K562 (cell line): ENCODE measurements at regions of chr11 and their contacts with region 1.

Region 1: GRCh38 chr11:56234155-56234554 is at the start of gene OR5T2:
- DNase-seq: no peak
- ATAC-seq: no peak
- H3K4me3 ChIP-seq: no peak within 1 kb of the TSS
- H3K27ac ChIP-seq: no peak within 1 kb of the TSS
- H3K4me1 ChIP-seq: no peaks in the 10 kb centered on the region
- H3K27me3 ChIP-seq: no peaks in the 10 kb centered on the region
- CTCF ChIP-seq: no peak
- EP300 ChIP-seq: no peak
- POLR2A ChIP-seq: no peak
- RAD21 ChIP-seq: no peak
- polyA plus RNA-seq, gene OR5T2: not detected

Region 2: DNA sequence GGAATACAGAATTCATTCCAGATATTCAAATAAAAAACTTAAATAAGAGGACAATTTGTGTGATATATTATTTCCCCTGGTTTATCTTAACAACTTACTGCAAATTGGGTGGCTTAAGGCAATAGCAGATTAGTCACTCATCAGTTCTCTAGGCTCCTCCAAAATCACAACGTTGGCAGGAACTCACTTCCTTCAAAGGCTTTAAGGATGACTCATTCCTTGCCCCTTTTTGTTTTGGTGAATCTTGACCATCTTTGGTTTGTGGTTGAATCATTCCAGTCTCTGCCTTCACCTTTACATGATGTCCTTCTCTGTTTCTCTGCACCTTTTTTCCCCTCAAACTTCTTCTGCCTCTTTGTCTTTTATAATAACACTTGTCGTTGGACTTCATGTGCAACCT is 267.8 kb before region 1 on chr11:
- CTCF ChIA-PET with region 1: no interaction called
- POLR2A ChIA-PET with region 1: no interaction called
- in situ Hi-C with region 1: no loop called
- intact Hi-C with region 1: no loop called
- DNase-seq: no peak
- ATAC-seq: no peak
- H3K4me3 ChIP-seq: no peak overlapping the region
- H3K27ac ChIP-seq: no peak overlapping the region
- H3K4me1 ChIP-seq: no peaks in the 10 kb centered on the region
- H3K27me3 ChIP-seq: no peaks in the 10 kb centered on the region
- CTCF ChIP-seq: no peak
- EP300 ChIP-seq: no peak
- POLR2A ChIP-seq: no peak
- RAD21 ChIP-seq: no peak

Region 3: GRCh38 chr11:56183459-56183858 is 50.7 kb before region 1 on chr11:
- CTCF ChIA-PET with region 1: no interaction called
- POLR2A ChIA-PET with region 1: no interaction called
- in situ Hi-C with region 1: no loop called
- intact Hi-C with region 1: loop called (anchors 10 kb)
- DNase-seq: no peak
- ATAC-seq: no peak
- H3K4me3 ChIP-seq: no peak overlapping the region
- H3K27ac ChIP-seq: no peak overlapping the region
- H3K4me1 ChIP-seq: no peaks in the 10 kb centered on the region
- H3K27me3 ChIP-seq: no peaks in the 10 kb centered on the region
- CTCF ChIP-seq: no peak
- EP300 ChIP-seq: no peak
- POLR2A ChIP-seq: no peak
- RAD21 ChIP-seq: no peak

Region 4: DNA sequence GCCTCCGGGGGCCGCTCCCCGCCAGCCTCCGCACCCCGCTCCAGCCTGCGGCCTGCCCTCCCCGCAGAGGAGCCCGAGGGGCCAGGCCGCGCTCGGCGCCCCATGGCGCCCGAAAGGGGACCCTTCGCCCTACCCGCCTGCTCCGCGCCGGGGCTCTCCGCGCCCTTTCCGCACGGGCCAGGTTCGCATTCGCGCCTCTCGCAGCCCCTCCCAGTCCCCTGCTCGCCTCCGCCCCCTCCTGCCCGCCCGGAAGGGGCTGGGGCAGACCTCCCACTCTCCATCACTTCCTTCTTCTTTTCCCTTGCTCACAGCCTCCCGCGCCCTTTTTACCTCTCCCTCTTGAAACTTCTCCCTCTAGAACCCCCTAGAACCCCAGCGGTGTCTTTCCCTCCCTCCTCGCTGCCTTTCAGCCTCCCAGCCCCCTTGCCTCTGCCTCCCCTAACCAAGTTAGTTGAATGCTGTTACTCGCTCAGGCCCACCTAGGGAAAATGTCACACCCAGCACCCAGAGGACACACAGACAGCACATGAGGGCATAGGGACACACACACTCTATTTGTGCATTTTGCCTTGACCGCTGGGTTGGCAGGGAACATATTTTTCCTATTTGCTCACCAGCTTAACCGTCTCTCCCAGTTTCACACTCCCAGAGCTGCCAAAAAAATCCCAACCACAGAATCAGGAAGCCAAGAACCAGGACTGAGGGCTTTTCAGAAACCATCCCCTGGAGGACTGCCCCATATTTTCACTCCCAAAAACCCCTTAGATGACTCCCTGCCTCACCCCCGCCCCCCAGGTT is 1193.0 kb after region 1 on chr11 and contains the start of gene SLC43A3:
- CTCF ChIA-PET with region 1: no interaction called
- POLR2A ChIA-PET with region 1: no interaction called
- in situ Hi-C with region 1: no loop called
- intact Hi-C with region 1: no loop called
- DNase-seq: peak; percentile 83 to 93 (median 90)
- ATAC-seq: peak; percentile 85
- H3K4me3 ChIP-seq: peak within 1 kb of the TSS; percentile 72
- H3K27ac ChIP-seq: peak within 1 kb of the TSS; percentile 91
- H3K4me1 ChIP-seq: peaks cover 43 to 59% of the 10 kb centered on the region in 2 experiments
- H3K27me3 ChIP-seq: no peaks in the 10 kb centered on the region
- CTCF ChIP-seq: 0 out of 6 replicates have a peak, but pooled peaks of 1 of the 3 experiments have one; percentile 1
- EP300 ChIP-seq: no peak
- POLR2A ChIP-seq: peak; percentile 89
- RAD21 ChIP-seq: no peak
- polyA plus RNA-seq, gene SLC43A3: 63.7 to 216 TPM